ENCODE measurements at regions of chr4 and their contacts with region 1.

Region 1: DNA sequence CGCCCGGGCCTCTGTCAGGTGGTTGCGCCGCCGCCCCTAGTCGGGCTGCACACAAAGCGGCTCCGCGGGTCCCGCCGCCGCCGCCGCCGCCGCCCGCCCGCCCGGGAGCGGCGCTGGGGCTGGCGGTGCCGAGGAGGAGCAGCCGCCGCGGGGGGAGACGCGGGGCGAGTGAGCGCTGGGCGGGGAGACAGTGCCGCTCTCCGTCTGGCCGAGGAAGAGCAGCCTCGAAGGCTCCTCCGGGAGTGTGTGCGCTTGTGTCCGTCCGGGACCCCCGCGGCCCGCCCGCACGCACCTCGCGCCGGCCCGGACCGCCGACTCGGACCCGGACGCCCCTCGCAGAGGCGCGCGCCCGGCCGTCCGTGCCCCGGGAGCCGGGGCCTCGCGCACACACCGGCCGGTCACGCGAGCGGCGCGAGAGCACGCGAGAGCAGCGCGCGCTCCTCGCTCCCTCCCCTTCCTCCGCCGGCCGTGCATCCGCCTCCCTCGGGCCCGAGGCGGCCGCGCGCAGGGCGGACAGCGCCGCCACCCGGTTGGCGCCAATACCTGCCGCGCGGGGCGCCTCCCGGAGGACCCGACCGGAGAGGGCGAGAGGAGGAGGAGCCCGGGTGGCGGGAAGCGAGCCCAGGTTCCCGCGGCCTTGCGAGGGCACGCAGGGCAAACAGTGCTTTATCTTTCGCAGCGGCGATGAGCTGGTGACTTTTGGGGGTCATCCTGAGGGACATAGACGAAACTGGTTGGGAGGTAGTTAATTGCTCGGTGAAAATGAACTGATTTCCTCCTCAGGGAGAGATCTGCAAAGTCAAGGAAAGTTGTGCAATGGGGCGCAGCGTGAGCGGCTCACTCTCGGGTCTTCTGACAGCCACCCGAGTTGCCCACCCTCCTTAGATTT is at the start of gene PDS5A:
- DNase-seq: peak; percentile 84 to 92 (median 89)
- H3K4me3 ChIP-seq: peak within 1 kb of the TSS; percentile 78
- H3K4me3 Mint-ChIP-seq: peak within 1 kb of the TSS; percentile 79 to 95 (median 89)
- H3K27ac ChIP-seq: peak within 1 kb of the TSS; percentile 83
- H3K27ac Mint-ChIP-seq: peak within 1 kb of the TSS; percentile 67 to 99 (median 96)
- H3K4me1 ChIP-seq: peaks cover 29% of the 10 kb centered on the region
- H3K4me1 Mint-ChIP-seq: peaks cover 29 to 41% (median 36%) of the 10 kb centered on the region in 3 donors
- H3K27me3 ChIP-seq: no peaks in the 10 kb centered on the region
- H3K27me3 Mint-ChIP-seq: no peaks in the 10 kb centered on the region
- total RNA-seq, gene PDS5A: 111 TPM

Region 2: DNA sequence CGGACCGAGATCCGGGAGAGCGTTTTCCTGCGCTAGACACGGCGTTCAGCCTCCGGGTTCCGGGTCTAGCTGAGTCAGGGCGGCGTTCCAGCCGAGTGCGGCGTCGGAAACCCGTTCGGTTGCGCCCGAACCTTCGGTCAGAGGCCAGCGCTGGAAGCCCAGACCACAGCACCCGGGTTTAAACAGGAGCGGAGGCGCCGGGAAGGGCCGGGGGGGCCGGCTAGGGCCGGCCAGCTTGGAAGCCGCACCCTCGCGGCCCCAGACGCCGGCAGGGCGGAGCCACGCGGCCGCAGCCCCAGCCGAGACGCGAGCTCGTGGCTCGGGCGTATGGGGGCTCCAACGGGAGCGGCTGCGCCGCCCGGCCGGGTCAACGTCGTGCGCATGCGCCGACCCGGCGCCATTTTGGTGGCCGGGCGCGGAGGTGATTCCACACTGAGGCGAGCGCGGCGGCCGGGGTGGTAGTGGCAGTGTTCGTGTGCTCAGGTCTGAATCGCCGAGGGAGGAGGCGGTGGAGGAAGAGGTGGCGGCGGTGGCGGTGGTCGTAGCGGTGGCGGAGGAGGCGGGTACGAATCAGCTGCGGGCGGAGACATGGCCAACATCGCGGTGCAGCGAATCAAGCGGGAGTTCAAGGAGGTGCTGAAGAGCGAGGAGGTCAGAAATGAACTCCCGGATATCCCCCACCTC is 279.9 kb before region 1 on chr4 and contains the start of gene UBE2K:
- CTCF ChIA-PET with region 1: interaction called, 43 read pairs
- POLR2A ChIA-PET with region 1: interaction called, 5 read pairs
- DNase-seq: peak; percentile 87 to 92 (median 91)
- H3K4me3 ChIP-seq: peak within 1 kb of the TSS; percentile 87
- H3K4me3 Mint-ChIP-seq: peak within 1 kb of the TSS; percentile 99 to 100 (median 99)
- H3K27ac ChIP-seq: peak within 1 kb of the TSS; percentile 92
- H3K27ac Mint-ChIP-seq: peak within 1 kb of the TSS; percentile 99 to 100 (median 99)
- H3K4me1 ChIP-seq: peaks cover 34% of the 10 kb centered on the region
- H3K4me1 Mint-ChIP-seq: peaks cover 37 to 52% (median 50%) of the 10 kb centered on the region in 3 donors
- H3K27me3 ChIP-seq: no peaks in the 10 kb centered on the region
- H3K27me3 Mint-ChIP-seq: peaks cover 0 to 11% of the 10 kb centered on the region in 2 donors
- total RNA-seq, gene UBE2K: 87.5 to 88.3 TPM